ENCODE measurements at regions of chrX and their contacts with region 1.

Region 1: DNA sequence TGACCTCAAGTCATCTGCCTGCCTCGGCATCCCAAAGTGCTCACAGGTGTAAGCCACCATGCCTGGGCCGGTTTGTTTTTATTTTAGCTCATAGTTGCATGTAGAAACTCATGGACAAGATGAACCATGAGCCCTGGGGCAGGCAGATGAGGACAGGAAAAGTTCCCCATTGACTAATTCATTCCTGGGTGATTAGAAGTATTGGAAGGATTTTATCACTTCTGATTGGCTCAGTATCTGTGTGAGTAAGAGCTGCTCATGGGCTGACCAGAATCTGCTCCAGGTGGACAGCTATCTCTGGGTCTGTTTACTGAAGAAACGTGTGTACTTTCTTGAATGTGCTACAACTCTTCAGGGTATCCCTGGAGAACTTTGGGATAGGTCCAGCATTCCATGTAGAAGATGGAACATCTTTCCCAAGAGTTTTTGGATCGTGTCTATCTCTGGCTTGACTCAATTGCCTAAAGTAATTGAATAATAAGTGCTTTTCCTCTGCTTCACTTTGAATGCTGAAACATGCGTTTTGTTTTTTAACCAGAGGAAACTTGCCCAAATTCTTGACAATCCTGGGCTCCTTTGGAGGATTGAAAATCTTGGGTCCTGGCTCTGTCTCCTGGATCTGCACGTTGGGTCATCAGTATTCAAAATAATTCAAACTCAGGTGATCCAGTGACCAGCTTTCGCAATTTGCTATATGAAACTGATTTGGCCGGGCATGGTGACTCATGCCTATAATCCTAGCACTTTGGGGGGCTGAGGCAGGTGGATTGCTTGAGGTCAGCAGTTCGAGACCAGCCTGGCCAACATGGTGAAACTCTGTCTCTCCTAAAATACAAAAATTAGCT is 88.6 kb upstream of the DHRSX start:
- DNase-seq: no peak
- H3K4me3 ChIP-seq: no peak overlapping the region
- H3K27ac ChIP-seq: no peak overlapping the region
- H3K4me1 ChIP-seq: peaks cover 0 to 13% (median 6%) of the 10 kb centered on the region in 4 donors
- H3K27me3 ChIP-seq: peaks cover 0 to 15% (median 2%) of the 10 kb centered on the region in 4 donors
- CTCF ChIP-seq: no peak
- EP300 ChIP-seq: no peak
- POLR2A ChIP-seq: no peak

Region 2: DNA sequence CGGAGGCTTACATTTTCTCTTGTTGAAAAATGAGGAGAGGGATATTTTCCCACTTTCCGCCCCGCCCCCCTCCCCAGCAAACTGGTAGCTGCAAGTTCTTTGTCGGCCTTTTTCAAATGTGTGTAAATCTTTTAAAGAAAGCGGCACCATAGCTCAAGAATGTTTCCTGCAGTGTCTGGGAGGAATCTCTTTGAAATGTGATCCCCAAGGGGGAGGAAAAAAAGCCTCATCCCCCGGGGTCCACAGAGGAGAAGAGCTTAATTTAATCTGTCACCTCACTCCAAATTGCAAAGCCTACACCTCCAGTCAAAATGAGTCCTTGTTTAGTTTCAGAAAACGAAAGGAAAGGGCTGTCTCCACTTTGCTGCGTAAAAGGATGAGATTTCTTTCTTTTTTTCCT is 939.8 kb before region 1 on chrX:
- intact Hi-C with region 1: loop called (anchors 5 kb)
- DNase-seq: no peak
- H3K4me3 ChIP-seq: no peak overlapping the region
- H3K27ac ChIP-seq: no peak overlapping the region
- H3K4me1 ChIP-seq: peaks cover 0 to 5% (median 0%) of the 10 kb centered on the region in 4 donors
- H3K27me3 ChIP-seq: peaks cover 0 to 15% (median 0%) of the 10 kb centered on the region in 4 donors
- CTCF ChIP-seq: no peak
- EP300 ChIP-seq: no peak
- POLR2A ChIP-seq: no peak

Region 3: GRCh38 chrX:2430265-2430825 is 159.1 kb before region 1 on chrX:
- intact Hi-C with region 1: no loop called
- DNase-seq: no peak
- H3K4me3 ChIP-seq: no peak overlapping the region
- H3K27ac ChIP-seq: no peak overlapping the region
- H3K4me1 ChIP-seq: no peaks in the 10 kb centered on the region
- H3K27me3 ChIP-seq: no peaks in the 10 kb centered on the region
- CTCF ChIP-seq: no peak
- EP300 ChIP-seq: no peak
- POLR2A ChIP-seq: no peak

Measured in esophagus muscularis mucosa (tissue), 4 donors.